Posterior vena cava (tissue), 2 donors: ENCODE measurements at regions of chr1 and their contacts with region 1.

Region 1: DNA sequence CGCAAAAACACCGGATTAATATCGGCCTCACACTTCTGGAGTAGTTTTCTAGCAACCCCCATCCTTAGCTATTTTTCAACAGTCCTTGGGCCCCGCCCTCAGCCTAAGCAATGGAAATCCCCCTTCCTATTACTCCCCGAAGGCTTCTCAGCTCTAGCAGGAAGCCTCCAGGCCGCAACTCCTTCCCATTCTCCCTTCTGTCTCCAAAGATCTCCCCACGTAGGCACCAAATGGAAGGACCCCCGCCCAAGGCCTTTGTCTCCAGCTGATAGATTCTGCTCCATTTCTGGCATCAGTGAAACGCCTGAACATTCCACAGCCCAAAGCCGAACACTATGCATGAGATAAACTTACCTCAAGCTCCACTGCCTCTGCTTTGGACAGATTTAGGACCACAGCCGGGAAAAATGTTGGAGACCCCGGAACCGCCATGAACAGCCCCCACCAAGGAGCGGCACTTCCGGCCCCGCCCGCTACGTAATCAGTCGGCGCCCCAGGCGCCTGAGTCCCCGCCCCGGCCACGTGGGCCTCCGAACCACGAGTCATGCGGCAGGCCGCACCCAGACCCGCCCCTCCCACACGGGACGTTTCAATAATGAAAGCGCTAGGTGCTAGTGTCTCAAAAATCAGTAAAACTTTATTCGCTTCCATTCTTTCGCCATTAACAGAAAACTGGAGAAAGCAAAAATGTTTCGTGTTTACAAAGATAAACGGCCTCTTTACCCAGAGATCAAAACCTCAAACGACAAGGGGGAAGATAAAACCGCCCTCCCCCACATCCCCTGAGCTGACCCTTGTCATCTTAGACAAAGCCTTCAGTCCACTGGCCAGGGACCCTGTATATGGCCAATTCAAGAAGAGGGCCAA is at the start of gene NRAS:
- DNase-seq: peak; percentile 99
- total RNA-seq, gene NRAS: 19.9 to 24.8 TPM

Region 2: GRCh38 chr1:114581335-114582287 is 134.9 kb before region 1 on chr1 and contains the start of gene BCAS2:
- intact Hi-C with region 1: loop called in 1 of 2 experiments (anchors 10 kb)
- DNase-seq: peak; percentile 98
- total RNA-seq, gene BCAS2: 31.1 to 31.3 TPM